ENCODE measurements at regions of chr20 and their contacts with region 1.

Region 1: DNA sequence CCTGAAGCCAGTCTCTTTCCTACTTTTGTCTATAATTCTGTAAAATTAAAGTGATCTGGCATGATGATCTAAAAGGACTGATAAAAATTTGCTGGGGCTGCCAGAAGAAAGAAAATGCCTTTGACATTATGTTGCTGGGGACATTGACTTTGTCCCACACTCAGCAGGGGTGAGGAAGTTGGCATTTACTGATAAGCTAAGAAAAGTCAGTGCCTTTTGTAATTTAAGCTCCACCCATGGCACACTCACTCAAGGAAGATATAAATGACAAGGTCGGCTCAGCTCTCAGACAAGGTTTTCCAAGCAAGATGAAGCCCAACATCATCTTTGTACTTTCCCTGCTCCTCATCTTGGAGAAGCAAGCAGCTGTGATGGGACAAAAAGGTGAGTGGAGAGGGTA is at the start of gene SEMG1:
- DNase-seq: no peak
- H3K4me3 ChIP-seq: no peak within 1 kb of the TSS
- H3K27ac ChIP-seq: no peak within 1 kb of the TSS
- H3K4me1 ChIP-seq: no peaks in the 10 kb centered on the region
- CTCF ChIP-seq: no peak
- total RNA-seq, gene SEMG1: not detected in 2 replicates

Region 2: GRCh38 chr20:45140836-45141235 is 65.9 kb before region 1 on chr20:
- CTCF ChIA-PET with region 1: no interaction called
- POLR2A ChIA-PET with region 1: no interaction called
- intact Hi-C with region 1: loop called (anchors 10 kb)
- DNase-seq: no peak
- H3K4me3 ChIP-seq: no peak overlapping the region
- H3K27ac ChIP-seq: no peak overlapping the region
- H3K4me1 ChIP-seq: no peaks in the 10 kb centered on the region
- CTCF ChIP-seq: no peak

Region 3: GRCh38 chr20:45293041-45294002 is 86.6 kb after region 1 on chr20:
- CTCF ChIA-PET with region 1: no interaction called
- POLR2A ChIA-PET with region 1: no interaction called
- intact Hi-C with region 1: no loop called
- DNase-seq: no peak
- H3K4me3 ChIP-seq: no peak overlapping the region
- H3K27ac ChIP-seq: no peak overlapping the region
- H3K4me1 ChIP-seq: no peaks in the 10 kb centered on the region
- CTCF ChIP-seq: no peak

Region 4: DNA sequence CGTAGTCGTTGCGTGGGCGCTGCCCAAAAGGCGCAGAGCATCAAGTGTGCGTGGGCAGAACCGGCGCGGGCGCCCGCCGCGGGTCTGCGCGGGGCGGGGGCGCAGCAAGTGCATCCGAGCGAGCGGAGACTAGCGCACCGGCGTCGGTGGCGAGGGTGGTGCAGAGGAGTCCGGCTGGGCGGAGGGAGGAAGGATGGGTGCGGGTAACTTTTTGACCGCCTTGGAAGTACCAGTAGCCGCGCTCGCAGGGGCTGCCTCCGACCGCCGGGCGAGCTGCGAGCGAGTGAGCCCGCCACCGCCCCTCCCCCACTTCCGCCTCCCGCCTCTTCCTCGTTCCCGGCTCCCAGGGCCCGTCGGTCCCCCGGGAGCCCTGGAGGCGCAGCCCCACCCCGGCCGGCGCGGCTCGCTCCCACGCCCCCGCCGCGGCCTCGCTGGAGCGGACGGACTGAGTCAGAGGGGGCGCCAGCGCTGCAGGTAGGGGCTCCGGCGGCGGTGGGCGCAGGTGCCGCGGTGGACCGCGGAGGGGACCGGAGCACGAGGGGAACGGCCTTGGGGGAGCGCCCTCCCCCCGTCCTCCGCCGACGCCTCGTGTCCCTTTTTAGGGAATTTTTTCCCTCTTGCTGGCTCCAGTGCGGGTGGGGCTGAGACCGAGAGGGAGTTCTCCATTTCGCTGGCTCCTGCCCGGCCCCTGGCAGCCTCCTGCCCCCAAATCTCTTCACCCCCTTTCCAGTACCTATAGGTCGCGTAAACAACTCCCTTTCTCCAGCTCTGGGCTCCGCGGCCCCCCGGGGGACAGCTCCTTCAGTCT is 199.7 kb after region 1 on chr20:
- CTCF ChIA-PET with region 1: no interaction called
- POLR2A ChIA-PET with region 1: no interaction called
- intact Hi-C with region 1: no loop called
- DNase-seq: no peak
- H3K4me3 ChIP-seq: peak overlapping the region; percentile 63
- H3K27ac ChIP-seq: no peak overlapping the region
- H3K4me1 ChIP-seq: no peaks in the 10 kb centered on the region
- CTCF ChIP-seq: no peak

Region 5: DNA sequence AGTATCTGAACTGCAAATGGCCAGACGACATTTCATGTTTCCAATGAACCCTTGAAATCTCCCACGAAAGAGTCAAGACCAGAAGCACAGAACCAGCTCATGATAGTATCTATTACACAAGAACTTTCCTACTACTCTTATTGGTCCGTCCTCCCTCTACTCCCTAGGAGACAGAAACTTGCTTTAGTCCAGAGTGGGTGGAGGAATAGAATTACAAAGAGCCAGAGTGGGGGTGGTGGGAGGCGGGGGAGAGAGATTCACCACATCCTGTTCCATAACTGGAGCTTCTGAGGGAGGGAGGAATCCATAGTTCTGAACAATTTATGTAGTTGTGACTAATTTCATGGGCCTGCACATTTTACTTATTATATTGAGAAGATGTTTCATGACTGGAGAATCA is 404.3 kb after region 1 on chr20:
- CTCF ChIA-PET with region 1: no interaction called
- POLR2A ChIA-PET with region 1: no interaction called
- intact Hi-C with region 1: no loop called
- DNase-seq: no peak
- H3K4me3 ChIP-seq: no peak overlapping the region
- H3K27ac ChIP-seq: no peak overlapping the region
- H3K4me1 ChIP-seq: no peaks in the 10 kb centered on the region
- CTCF ChIP-seq: no peak

Measured in OCI-LY7 (cell line).